Activated CD4-positive, alpha-beta T cell treated with anti-CD3 and anti-CD28 coated beads for 36 hours (primary cell): ENCODE measurements at regions of chr11 and their contacts with region 1.

Region 1: GRCh38 chr11:107598225-107599139 is 7.5 kb downstream of the ELMOD1 start:
- DNase-seq: peak; percentile 44
- ATAC-seq: peak; percentile 74
- H3K4me3 Mint-ChIP-seq: no peak overlapping the region
- H3K27ac Mint-ChIP-seq: no peak overlapping the region
- H3K4me1 Mint-ChIP-seq: no peaks in the 10 kb centered on the region
- H3K27me3 Mint-ChIP-seq: peaks cover 49% of the 10 kb centered on the region

Region 2: GRCh38 chr11:107583629-107584195 is 14.8 kb before region 1 on chr11:
- CTCF ChIA-PET with region 1: interaction called, 5 read pairs
- POLR2A ChIA-PET with region 1: no interaction called
- intact Hi-C with region 1: loop called in 1 of 2 experiments (anchors 2 kb)
- DNase-seq: no peak
- ATAC-seq: peak; percentile 65
- H3K4me3 Mint-ChIP-seq: no peak overlapping the region
- H3K27ac Mint-ChIP-seq: no peak overlapping the region
- H3K4me1 Mint-ChIP-seq: no peaks in the 10 kb centered on the region
- H3K27me3 Mint-ChIP-seq: peaks cover 38% of the 10 kb centered on the region

Region 3: GRCh38 chr11:107676336-107677057 is 78.0 kb after region 1 on chr11:
- CTCF ChIA-PET with region 1: no interaction called
- POLR2A ChIA-PET with region 1: no interaction called
- intact Hi-C with region 1: no loop called
- DNase-seq: no peak
- ATAC-seq: no peak
- H3K4me3 Mint-ChIP-seq: no peak overlapping the region
- H3K27ac Mint-ChIP-seq: no peak overlapping the region
- H3K4me1 Mint-ChIP-seq: no peaks in the 10 kb centered on the region
- H3K27me3 Mint-ChIP-seq: peaks cover 16% of the 10 kb centered on the region

Region 4: GRCh38 chr11:107757661-107758060 is 159.2 kb after region 1 on chr11:
- CTCF ChIA-PET with region 1: no interaction called
- POLR2A ChIA-PET with region 1: no interaction called
- intact Hi-C with region 1: no loop called
- DNase-seq: no peak
- ATAC-seq: no peak
- H3K4me3 Mint-ChIP-seq: no peak overlapping the region
- H3K27ac Mint-ChIP-seq: no peak overlapping the region
- H3K4me1 Mint-ChIP-seq: no peaks in the 10 kb centered on the region
- H3K27me3 Mint-ChIP-seq: peaks cover 23% of the 10 kb centered on the region